ENCODE measurements at regions of chr9 and their contacts with region 1.

Region 1: GRCh38 chr9:126965541-126966428 is 51.2 kb downstream of the RALGPS1 start:
- DNase-seq: peak; percentile 63
- CTCF ChIP-seq: peak; percentile 72

Region 2: GRCh38 chr9:126894052-126894603 is 71.7 kb before region 1 on chr9:
- in situ Hi-C with region 1: no loop called
- DNase-seq: no peak
- CTCF ChIP-seq: no peak

Region 3: GRCh38 chr9:127199001-127199791 is 233.4 kb after region 1 on chr9:
- in situ Hi-C with region 1: loop called (anchors 10 kb)
- DNase-seq: peak; percentile 90
- CTCF ChIP-seq: peak; percentile 89

Measured in GM13976 (cell line).